PC-3 (cell line): ENCODE measurements at regions of chr5 and their contacts with region 1.

Region 1: DNA sequence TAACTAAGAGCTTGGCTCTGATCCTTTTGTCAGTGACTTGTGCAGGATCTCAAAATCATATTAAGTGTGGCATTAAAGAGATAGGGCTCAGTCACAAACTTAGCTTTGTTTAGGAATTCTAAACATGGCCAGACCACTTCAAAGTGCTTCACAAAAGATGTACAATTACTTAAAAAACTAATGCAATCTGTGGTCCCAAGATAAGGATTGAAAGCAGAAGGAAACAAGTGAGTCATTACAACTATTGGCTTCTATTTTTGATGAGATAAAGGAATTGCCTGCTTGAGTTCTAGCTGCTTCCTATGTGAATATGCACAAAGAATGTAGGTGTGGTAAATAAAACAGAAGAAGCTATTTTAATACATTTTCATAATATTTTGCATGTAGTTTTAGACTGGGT is 44.9 kb upstream of the SLC12A2 start:
- DNase-seq: peak; percentile 79
- ATAC-seq: peak; percentile 80
- H3K4me3 ChIP-seq: no peak overlapping the region
- H3K27ac ChIP-seq: peak overlapping the region; percentile 79
- H3K4me1 ChIP-seq: peaks cover 27% of the 10 kb centered on the region
- H3K27me3 ChIP-seq: no peaks in the 10 kb centered on the region
- CTCF ChIP-seq: no peak

Region 2: GRCh38 chr5:127875235-127876021 is 163.2 kb before region 1 on chr5:
- CTCF ChIA-PET with region 1: no interaction called
- POLR2A ChIA-PET with region 1: no interaction called
- intact Hi-C with region 1: loop called (anchors 5 kb)
- DNase-seq: peak; percentile 78
- ATAC-seq: peak; percentile 76
- H3K4me3 ChIP-seq: no peak overlapping the region
- H3K27ac ChIP-seq: 0 out of 2 replicates have a peak overlapping the region, but pooled peaks have one; percentile 9
- H3K4me1 ChIP-seq: peaks cover 17% of the 10 kb centered on the region
- H3K27me3 ChIP-seq: no peaks in the 10 kb centered on the region
- CTCF ChIP-seq: peak; percentile 73

Region 3: DNA sequence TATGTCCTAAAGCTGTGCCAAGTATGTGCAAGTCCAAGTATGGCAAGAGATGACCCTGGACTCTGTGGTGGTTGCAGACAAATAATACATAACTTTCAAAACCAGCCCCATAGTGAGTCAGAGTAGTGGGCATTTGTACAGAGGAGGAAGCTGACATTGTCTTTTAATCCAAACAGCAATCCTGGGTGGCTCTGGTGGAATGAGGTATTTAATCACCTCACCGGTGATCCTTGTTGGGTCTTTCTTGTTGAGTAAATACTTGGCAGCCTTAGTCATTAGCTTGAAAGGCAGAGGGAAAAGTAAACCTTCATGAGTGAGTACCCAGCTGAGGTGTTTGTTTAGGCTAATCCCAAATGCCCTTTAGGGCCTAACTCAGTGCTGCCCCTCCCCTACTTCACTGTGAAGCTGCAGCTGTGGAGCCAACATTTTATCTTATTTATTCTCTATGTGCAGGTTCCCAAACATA is 103.8 kb before region 1 on chr5:
- CTCF ChIA-PET with region 1: no interaction called
- POLR2A ChIA-PET with region 1: interaction called, 6 read pairs
- intact Hi-C with region 1: loop called (anchors 1 kb)
- DNase-seq: peak; percentile 99
- ATAC-seq: peak; percentile 94
- H3K4me3 ChIP-seq: no peak overlapping the region
- H3K27ac ChIP-seq: peak overlapping the region; percentile 89
- H3K4me1 ChIP-seq: peaks cover 41% of the 10 kb centered on the region
- H3K27me3 ChIP-seq: no peaks in the 10 kb centered on the region
- CTCF ChIP-seq: peak; percentile 60

Region 4: GRCh38 chr5:127981498-127981897 is 57.1 kb before region 1 on chr5:
- CTCF ChIA-PET with region 1: no interaction called
- POLR2A ChIA-PET with region 1: no interaction called
- intact Hi-C with region 1: loop called (anchors 5 kb)
- DNase-seq: no peak
- ATAC-seq: no peak
- H3K4me3 ChIP-seq: no peak overlapping the region
- H3K27ac ChIP-seq: no peak overlapping the region
- H3K4me1 ChIP-seq: peaks cover 21% of the 10 kb centered on the region
- H3K27me3 ChIP-seq: no peaks in the 10 kb centered on the region
- CTCF ChIP-seq: no peak

Region 5: DNA sequence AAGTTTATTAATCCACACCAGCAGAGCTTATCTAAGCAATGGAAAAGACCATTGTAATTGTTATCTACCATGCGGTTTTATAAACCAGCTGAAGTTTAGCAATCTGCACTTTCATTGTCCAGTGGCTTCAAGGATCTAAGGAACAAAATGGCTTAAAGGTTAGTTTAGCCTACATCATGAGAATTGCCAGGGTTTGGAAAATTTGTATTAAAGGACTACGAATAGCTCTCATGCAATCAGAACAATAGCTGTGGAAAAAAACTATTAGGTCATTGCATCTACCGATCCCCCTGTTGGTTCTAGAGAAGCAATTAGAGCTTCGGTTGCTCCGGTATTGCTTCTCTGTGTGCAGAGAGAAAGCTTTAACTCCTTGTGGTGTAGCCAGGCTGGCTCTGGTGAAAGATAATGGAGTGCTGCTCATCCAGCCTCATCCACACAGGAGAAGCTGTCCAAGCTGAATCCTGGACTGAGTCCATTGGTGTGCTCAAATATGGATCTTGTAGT is 41.4 kb before region 1 on chr5:
- CTCF ChIA-PET with region 1: interaction called, 3 read pairs
- POLR2A ChIA-PET with region 1: no interaction called
- intact Hi-C with region 1: loop called (anchors 5 kb)
- DNase-seq: no peak
- ATAC-seq: no peak
- H3K4me3 ChIP-seq: no peak overlapping the region
- H3K27ac ChIP-seq: no peak overlapping the region
- H3K4me1 ChIP-seq: peaks cover 4% of the 10 kb centered on the region
- H3K27me3 ChIP-seq: no peaks in the 10 kb centered on the region
- CTCF ChIP-seq: no peak

Region 6: DNA sequence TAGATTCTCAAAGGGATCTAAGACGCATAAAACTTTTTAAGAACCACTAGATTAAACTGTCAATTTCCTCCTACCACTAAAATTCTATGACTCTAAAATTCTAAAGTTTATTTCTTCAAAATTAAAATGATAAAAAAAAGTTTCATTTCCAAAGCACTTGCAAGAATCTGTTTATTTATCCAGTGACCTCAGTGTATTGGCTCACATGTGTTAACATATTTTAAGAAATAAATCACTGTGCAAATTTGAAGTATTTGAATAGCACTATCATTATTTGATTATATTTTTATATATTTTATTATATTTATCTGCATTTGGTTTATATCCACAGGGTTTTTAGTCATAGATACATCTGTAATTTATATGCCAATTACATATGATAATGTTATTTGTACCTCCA is 17.2 kb before region 1 on chr5:
- CTCF ChIA-PET with region 1: no interaction called
- POLR2A ChIA-PET with region 1: no interaction called
- intact Hi-C with region 1: no loop called
- DNase-seq: no peak
- ATAC-seq: peak; percentile 70
- H3K4me3 ChIP-seq: no peak overlapping the region
- H3K27ac ChIP-seq: no peak overlapping the region
- H3K4me1 ChIP-seq: no peaks in the 10 kb centered on the region
- H3K27me3 ChIP-seq: no peaks in the 10 kb centered on the region
- CTCF ChIP-seq: no peak

Region 7: DNA sequence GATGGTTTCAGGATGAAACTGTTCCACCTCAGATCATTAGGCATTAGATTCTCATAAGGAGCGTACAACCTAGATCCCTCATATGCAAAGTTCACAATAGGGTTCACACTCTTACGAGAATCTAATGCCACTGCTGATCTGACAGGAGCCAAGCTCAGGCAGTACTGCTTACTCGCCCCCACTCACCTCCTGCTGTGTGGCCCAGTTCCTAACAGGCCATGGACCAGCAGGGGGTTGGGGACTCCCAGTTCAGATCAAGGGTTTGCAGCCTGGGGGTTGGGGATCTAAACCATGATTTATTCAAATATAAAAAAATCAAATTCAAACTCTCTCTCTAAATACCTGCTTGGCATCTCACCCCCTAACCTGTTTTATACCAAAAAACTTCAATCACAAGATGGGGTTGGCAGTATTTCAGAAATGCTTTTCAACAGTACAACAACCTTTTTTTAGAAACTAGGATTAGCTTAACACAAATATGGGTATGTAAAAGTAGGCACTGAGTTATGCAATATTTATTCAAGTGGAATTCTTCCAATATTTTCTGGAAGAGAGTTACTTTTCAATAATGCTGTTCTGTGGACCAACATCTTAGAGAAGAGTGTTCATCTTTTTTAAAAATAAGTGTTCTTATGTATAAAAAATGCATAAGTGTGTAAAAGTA is 14.8 kb after region 1 on chr5:
- CTCF ChIA-PET with region 1: no interaction called
- POLR2A ChIA-PET with region 1: no interaction called
- intact Hi-C with region 1: loop called (anchors 2 kb)
- DNase-seq: peak; percentile 51
- ATAC-seq: peak; percentile 66
- H3K4me3 ChIP-seq: no peak overlapping the region
- H3K27ac ChIP-seq: peak overlapping the region; percentile 23
- H3K4me1 ChIP-seq: peaks cover 24% of the 10 kb centered on the region
- H3K27me3 ChIP-seq: no peaks in the 10 kb centered on the region
- CTCF ChIP-seq: no peak

Region 8: DNA sequence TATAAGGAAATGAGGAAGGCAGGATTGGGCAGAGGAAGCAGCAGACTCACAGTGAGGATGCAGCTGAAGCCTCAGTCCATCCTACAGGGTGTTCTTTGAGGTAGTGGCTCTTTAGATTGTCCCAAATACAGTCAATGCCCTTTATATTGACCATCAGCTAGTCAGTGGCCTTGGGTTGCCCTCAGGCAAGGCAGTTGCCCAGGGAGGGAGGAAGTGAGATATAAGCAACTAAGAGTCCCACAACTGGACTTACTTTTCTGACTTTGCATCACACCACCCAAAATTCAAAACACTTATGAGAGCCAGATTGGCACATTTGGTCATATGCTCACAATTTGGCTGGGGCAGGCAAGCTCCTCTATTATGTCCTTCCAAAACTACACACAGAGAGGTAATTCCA is 35.5 kb after region 1 on chr5:
- CTCF ChIA-PET with region 1: no interaction called
- POLR2A ChIA-PET with region 1: no interaction called
- intact Hi-C with region 1: no loop called
- DNase-seq: no peak
- ATAC-seq: no peak
- H3K4me3 ChIP-seq: no peak overlapping the region
- H3K27ac ChIP-seq: no peak overlapping the region
- H3K4me1 ChIP-seq: peaks cover 3% of the 10 kb centered on the region; the same call in 1 of the 2 replicates
- H3K27me3 ChIP-seq: no peaks in the 10 kb centered on the region
- CTCF ChIP-seq: no peak